ENCODE measurements at regions of chr9 and their contacts with region 1.

Region 1: DNA sequence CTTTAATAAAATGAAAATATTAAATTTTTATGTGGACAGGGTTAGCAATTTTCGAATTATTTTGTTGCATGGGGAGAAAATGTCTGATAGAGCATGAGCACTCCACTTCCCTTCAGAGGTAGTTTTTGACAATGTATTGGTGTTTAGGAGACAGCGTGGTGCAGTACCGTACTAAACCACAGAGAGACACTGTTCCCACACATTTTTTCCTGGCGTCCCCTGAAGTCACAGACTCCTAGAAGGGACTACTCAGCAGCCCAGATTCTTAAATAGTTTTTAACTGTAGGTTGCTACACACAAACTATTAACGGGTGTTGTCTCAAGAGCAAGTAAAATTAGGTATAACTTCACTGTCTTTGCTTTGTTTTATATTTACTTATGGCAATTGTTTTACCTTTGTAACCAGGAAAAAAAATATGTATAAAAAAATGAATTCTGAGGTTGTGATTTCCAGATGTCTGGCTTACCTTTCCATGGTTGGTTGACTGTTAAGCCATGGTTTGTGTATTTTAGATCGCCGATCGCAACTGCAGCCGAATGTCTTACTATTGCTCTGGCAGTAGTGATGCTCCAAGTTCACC is 171.2 kb downstream of the DOCK8 start:
- DNase-seq: peak; percentile 12 to 60 (median 30)
- H3K4me3 ChIP-seq: no peak overlapping the region
- H3K27ac ChIP-seq: no peak overlapping the region
- H3K4me1 ChIP-seq: no peaks in the 10 kb centered on the region
- H3K27me3 ChIP-seq: no peaks in the 10 kb centered on the region
- CTCF ChIP-seq: peak in 2 of 3 donors; percentile 68 to 81
- EP300 ChIP-seq: no peak
- POLR2A ChIP-seq: no peak

Region 2: DNA sequence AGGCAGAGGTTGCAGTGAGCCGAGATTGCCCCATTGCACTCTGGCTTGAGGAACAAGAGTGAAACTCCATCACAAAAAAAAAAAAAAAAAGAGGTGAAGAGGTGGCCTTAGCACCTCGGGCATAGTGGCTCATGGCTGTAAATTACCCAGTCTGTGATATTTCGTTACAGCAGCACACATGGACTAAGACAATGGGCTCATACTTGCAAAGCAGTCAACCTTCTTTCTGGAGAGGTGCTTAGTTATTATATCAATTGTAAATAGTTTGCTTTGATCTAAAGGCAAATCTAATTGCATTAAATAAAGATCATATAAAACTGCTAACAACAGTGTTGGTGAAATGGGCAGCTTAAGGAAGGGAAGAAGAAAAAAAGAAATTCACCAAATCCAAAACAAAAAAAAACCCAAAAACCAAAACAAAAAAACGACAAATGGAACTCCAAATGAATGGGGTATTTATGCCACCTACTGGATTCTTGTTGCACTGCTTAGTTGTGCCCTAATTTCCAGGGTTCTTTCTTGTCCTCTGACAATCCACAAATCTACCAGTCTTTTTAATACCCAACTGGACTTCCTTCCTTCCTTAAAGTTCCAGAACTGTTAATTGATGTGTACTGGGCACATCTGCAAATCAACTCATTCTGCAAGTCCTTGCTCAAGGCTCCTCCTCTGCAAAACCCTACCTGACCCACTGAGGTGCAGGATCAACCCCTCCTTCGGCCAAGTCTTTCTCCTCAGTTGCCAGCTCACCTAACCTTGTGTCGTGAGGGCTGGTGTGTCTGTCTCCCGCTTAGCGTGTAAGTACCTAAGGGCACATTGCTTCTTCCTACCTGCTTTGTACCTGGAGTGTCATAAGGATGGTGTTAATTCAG is 420.6 kb after region 1 on chr9:
- intact Hi-C with region 1: loop called in 1 of 4 experiments (anchors 10 kb)
- DNase-seq: no peak
- H3K4me3 ChIP-seq: no peak overlapping the region
- H3K27ac ChIP-seq: no peak overlapping the region
- H3K4me1 ChIP-seq: no peaks in the 10 kb centered on the region
- H3K27me3 ChIP-seq: no peaks in the 10 kb centered on the region
- CTCF ChIP-seq: peak; percentile 14 to 38 (median 20)
- EP300 ChIP-seq: no peak
- POLR2A ChIP-seq: no peak

Region 3: GRCh38 chr9:1009101-1009707 is 623.3 kb after region 1 on chr9:
- intact Hi-C with region 1: loop called in 1 of 4 experiments (anchors 10 kb)
- DNase-seq: peak; percentile 38 to 85 (median 66)
- H3K4me3 ChIP-seq: no peak overlapping the region
- H3K27ac ChIP-seq: no peak overlapping the region
- H3K4me1 ChIP-seq: no peaks in the 10 kb centered on the region
- H3K27me3 ChIP-seq: no peaks in the 10 kb centered on the region
- CTCF ChIP-seq: peak in 2 of 3 donors; percentile 24 to 36
- EP300 ChIP-seq: no peak
- POLR2A ChIP-seq: no peak